Activated CD4-positive, alpha-beta T cell treated with anti-CD3 and anti-CD28 coated beads, Interleukin-2, amount 10 ng/mL, durations not matched to agents 7 days and 5 days (primary cell): ENCODE measurements at regions of chr15 and their contacts with region 1.

Region 1: GRCh38 chr15:58252586-58253323 is 114.6 kb downstream of the AQP9 start:
- DNase-seq: no peak
- H3K4me3 Mint-ChIP-seq: no peak overlapping the region
- H3K27ac Mint-ChIP-seq: no peak overlapping the region
- H3K4me1 Mint-ChIP-seq: peaks cover 17% of the 10 kb centered on the region
- H3K27me3 Mint-ChIP-seq: peaks cover 6% of the 10 kb centered on the region

Region 2: GRCh38 chr15:58229297-58229768 is 23.4 kb before region 1 on chr15:
- CTCF ChIA-PET with region 1: no interaction called
- POLR2A ChIA-PET with region 1: interaction called, 11 read pairs
- DNase-seq: no peak
- H3K4me3 Mint-ChIP-seq: no peak overlapping the region
- H3K27ac Mint-ChIP-seq: no peak overlapping the region
- H3K4me1 Mint-ChIP-seq: peaks cover 15% of the 10 kb centered on the region
- H3K27me3 Mint-ChIP-seq: peaks cover 13% of the 10 kb centered on the region

Region 3: GRCh38 chr15:58396181-58396580 is 143.4 kb after region 1 on chr15:
- CTCF ChIA-PET with region 1: no interaction called
- POLR2A ChIA-PET with region 1: no interaction called
- DNase-seq: no peak
- H3K4me3 Mint-ChIP-seq: no peak overlapping the region
- H3K27ac Mint-ChIP-seq: no peak overlapping the region
- H3K4me1 Mint-ChIP-seq: no peaks in the 10 kb centered on the region
- H3K27me3 Mint-ChIP-seq: peaks cover 5% of the 10 kb centered on the region